ENCODE measurements at regions of chr2 and their contacts with region 1.

Region 1: GRCh38 chr2:71923887-71924533 is 223.7 kb downstream of the CYP26B1 start:
- DNase-seq: no peak
- H3K4me3 ChIP-seq: no peak overlapping the region
- CTCF ChIP-seq: peak; percentile 48

Region 2: GRCh38 chr2:71907503-71907902 is 16.5 kb before region 1 on chr2:
- CTCF ChIA-PET with region 1: interaction called, 11 read pairs
- POLR2A ChIA-PET with region 1: no interaction called
- DNase-seq: no peak
- H3K4me3 ChIP-seq: no peak overlapping the region
- CTCF ChIP-seq: no peak

Region 3: GRCh38 chr2:71943238-71944182 is 19.5 kb after region 1 on chr2:
- CTCF ChIA-PET with region 1: interaction called, 12 read pairs
- POLR2A ChIA-PET with region 1: no interaction called
- DNase-seq: no peak
- H3K4me3 ChIP-seq: no peak overlapping the region
- CTCF ChIP-seq: no peak

Region 4: GRCh38 chr2:71974846-71975245 is 50.8 kb after region 1 on chr2:
- CTCF ChIA-PET with region 1: no interaction called
- POLR2A ChIA-PET with region 1: no interaction called
- DNase-seq: peak; percentile 10
- H3K4me3 ChIP-seq: no peak overlapping the region
- CTCF ChIP-seq: no peak